Vagina (tissue), 2 donors: ENCODE measurements at regions of chr5 and their contacts with region 1.

Region 1: GRCh38 chr5:136769900-136770684 is 404.7 kb upstream of the TRPC7 start:
- DNase-seq: no peak
- H3K4me3 ChIP-seq: no peak overlapping the region
- H3K27ac ChIP-seq: no peak overlapping the region
- H3K4me1 ChIP-seq: no peaks in the 10 kb centered on the region
- H3K27me3 ChIP-seq: no peaks in the 10 kb centered on the region
- CTCF ChIP-seq: peak in 2 of 3 experiments; percentile 69 to 79
- POLR2A ChIP-seq: no peak

Region 2: DNA sequence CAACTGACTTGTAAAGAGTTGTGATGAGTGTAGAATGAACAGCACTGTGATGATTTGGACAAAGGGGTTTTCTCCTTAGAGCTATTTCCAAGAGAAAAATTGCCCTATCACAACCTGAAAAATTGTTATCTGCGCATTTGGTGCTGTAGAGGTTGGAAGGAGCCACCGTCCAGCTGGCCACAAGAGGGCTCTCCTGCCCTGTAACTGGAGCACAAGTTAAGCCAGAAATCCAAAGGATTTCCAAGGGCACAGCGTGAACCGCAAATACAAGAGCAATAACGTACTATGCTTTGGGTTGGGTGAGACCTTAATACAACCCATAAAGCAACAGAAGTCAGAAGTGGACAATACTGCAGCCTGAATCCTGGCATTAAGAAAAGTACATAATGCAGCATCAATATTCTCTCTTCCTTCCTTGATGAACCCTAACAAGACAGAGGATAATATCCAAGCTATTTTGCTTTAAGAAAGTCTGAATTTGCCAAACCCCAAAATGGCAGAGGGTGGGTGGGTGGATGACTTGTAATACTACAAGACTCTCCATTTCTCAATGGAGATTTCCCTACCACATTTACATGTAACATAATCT is 520.3 kb before region 1 on chr5:
- intact Hi-C with region 1: loop called (anchors 10 kb)
- DNase-seq: no peak
- H3K4me3 ChIP-seq: no peak overlapping the region
- H3K27ac ChIP-seq: no peak overlapping the region
- H3K4me1 ChIP-seq: no peaks in the 10 kb centered on the region
- H3K27me3 ChIP-seq: no peaks in the 10 kb centered on the region
- CTCF ChIP-seq: peak; percentile 56 to 60 (median 60)
- POLR2A ChIP-seq: no peak

Region 3: GRCh38 chr5:136522217-136522956 is 247.7 kb before region 1 on chr5:
- intact Hi-C with region 1: no loop called
- DNase-seq: no peak
- H3K4me3 ChIP-seq: no peak overlapping the region
- H3K27ac ChIP-seq: no peak overlapping the region
- H3K4me1 ChIP-seq: no peaks in the 10 kb centered on the region
- H3K27me3 ChIP-seq: no peaks in the 10 kb centered on the region
- CTCF ChIP-seq: no peak
- POLR2A ChIP-seq: no peak

Region 4: GRCh38 chr5:136820848-136821247 is 50.8 kb after region 1 on chr5:
- intact Hi-C with region 1: no loop called
- DNase-seq: no peak
- H3K4me3 ChIP-seq: no peak overlapping the region
- H3K27ac ChIP-seq: no peak overlapping the region
- H3K4me1 ChIP-seq: no peaks in the 10 kb centered on the region
- H3K27me3 ChIP-seq: no peaks in the 10 kb centered on the region
- CTCF ChIP-seq: no peak
- POLR2A ChIP-seq: no peak